ENCODE measurements at regions of chr14 and their contacts with region 1.

Region 1: DNA sequence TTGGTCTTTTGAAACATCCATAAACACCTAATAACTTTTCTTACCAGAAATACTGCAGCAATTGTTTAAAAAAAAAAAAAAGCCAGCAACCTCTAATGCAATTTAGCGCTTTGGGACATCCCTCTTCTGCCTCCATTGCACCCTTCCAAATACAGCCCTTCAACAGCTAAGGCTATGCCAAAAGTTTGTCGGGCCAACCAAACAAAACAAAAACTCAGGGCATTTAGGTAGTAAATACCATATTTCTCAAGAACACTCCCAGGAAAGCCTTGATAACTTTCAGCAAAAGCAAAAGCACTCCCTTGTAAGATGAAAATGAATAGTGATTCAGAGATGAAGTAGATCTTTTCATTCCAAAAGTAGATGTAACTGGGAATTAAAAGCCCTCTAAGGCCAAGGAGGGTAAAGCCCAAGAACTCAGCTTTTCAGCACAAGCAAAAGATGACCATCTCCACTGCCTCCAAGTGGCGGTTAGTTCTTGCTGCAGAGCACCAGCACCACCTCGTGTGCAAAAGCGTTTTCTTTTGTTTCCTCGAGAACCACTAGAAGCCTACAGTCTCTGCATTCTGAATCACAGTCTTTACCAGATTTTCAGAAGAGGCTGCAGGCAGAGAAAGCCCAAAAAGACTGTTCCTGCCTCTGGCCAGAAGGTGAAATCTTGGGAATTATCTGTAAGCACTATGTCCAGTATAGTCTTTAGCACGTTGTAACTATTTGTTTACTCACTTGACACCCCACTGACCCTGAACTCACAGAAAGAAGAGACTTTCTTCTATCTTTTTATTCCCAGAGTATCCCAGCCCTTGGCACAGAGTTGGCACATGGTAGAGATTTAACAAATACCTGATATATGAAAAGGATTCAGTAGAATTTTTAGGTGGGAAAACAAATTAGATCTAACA is 53.1 kb downstream of the SIX6 start:
- DNase-seq: peak; percentile 93
- H3K4me3 ChIP-seq: no peak overlapping the region
- H3K27ac ChIP-seq: peak overlapping the region; percentile 42
- H3K4me1 ChIP-seq: peaks cover 39% of the 10 kb centered on the region
- H3K27me3 ChIP-seq: no peaks in the 10 kb centered on the region

Region 2: GRCh38 chr14:60064491-60065072 is 497.5 kb before region 1 on chr14:
- in situ Hi-C with region 1: loop called (anchors 25 kb)
- DNase-seq: peak; percentile 57
- H3K4me3 ChIP-seq: no peak overlapping the region
- H3K27ac ChIP-seq: no peak overlapping the region
- H3K4me1 ChIP-seq: peaks cover 10% of the 10 kb centered on the region
- H3K27me3 ChIP-seq: no peaks in the 10 kb centered on the region

Region 3: GRCh38 chr14:60278350-60278749 is 283.7 kb before region 1 on chr14:
- in situ Hi-C with region 1: no loop called
- DNase-seq: no peak
- H3K4me3 ChIP-seq: no peak overlapping the region
- H3K27ac ChIP-seq: no peak overlapping the region
- H3K4me1 ChIP-seq: peaks cover 14% of the 10 kb centered on the region
- H3K27me3 ChIP-seq: no peaks in the 10 kb centered on the region

Region 4: GRCh38 chr14:60349663-60350365 is 212.3 kb before region 1 on chr14:
- in situ Hi-C with region 1: loop called (anchors 5 kb)
- DNase-seq: peak; percentile 70
- H3K4me3 ChIP-seq: no peak overlapping the region
- H3K27ac ChIP-seq: no peak overlapping the region
- H3K4me1 ChIP-seq: peaks cover 4% of the 10 kb centered on the region; the same call in 1 of the 2 replicates
- H3K27me3 ChIP-seq: no peaks in the 10 kb centered on the region